Activated CD4-positive, alpha-beta T cell treated with anti-CD3 and anti-CD28 coated beads for 36 hours (primary cell): ENCODE measurements at regions of chr19 and their contacts with region 1.

Region 1: GRCh38 chr19:17419621-17420466 is at the start of gene MVB12A:
- DNase-seq: peak; percentile 97
- ATAC-seq: peak; percentile 95
- H3K4me3 Mint-ChIP-seq: peak within 1 kb of the TSS; percentile 91
- H3K27ac Mint-ChIP-seq: peak within 1 kb of the TSS; percentile 87
- H3K4me1 Mint-ChIP-seq: peaks cover 11% of the 10 kb centered on the region
- H3K27me3 Mint-ChIP-seq: no peaks in the 10 kb centered on the region
- total RNA-seq, gene MVB12A: 27.6 to 32.6 TPM

Region 2: GRCh38 chr19:17226002-17226933 is 193.6 kb before region 1 on chr19 and contains the start of gene OCEL1:
- CTCF ChIA-PET with region 1: no interaction called
- POLR2A ChIA-PET with region 1: no interaction called
- intact Hi-C with region 1: loop called in 1 of 2 experiments (anchors 1 kb)
- DNase-seq: peak; percentile 99
- ATAC-seq: peak; percentile 92
- H3K4me3 Mint-ChIP-seq: peak within 1 kb of the TSS; percentile 80
- H3K27ac Mint-ChIP-seq: peak within 1 kb of the TSS; percentile 93
- H3K4me1 Mint-ChIP-seq: peaks cover 7% of the 10 kb centered on the region
- H3K27me3 Mint-ChIP-seq: no peaks in the 10 kb centered on the region
- total RNA-seq, gene OCEL1: 10.9 to 11.7 TPM

Region 3: DNA sequence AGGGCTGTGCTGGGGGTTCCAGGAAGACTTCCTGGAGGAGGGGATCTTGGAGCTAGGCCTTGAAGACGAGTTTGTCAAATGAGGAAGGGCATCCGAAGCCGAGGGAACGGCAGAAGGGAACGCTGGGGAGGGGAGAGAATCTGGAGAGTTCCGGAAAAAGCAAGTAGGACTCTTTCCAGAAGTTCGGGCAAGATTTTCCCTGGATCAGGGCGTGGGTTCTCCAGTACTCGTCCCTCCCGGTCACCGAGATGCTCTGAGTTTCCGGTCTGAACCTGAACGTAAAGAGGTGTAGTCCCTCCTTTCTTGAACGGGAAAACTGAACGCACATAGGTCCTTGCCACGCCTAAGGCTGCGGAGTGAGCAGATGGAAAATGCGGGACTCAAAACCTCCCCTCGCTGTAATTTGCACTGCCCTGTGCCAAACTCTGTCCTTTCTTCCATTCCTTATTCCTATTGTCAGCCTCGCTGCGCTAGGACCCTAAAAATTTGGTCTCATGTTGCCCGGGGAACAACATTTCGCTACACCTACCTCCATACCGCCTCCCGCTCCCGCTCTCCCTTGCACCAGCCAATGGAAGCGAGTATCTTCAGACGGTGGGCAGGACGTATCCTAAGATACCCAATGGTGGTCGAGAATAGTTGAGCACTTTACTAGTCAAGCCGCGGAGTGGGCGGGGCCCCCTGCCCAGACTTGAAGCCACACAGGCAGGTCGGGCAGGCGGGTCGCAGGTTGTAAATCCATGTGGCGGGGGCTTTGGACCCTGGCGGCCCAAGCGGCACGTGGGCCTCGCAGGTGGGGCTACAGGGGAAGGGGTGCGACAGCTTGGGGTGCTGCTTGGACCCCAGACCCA is 82.7 kb before region 1 on chr19 and contains the start of gene GTPBP3:
- CTCF ChIA-PET with region 1: interaction called, 3 read pairs
- POLR2A ChIA-PET with region 1: no interaction called
- intact Hi-C with region 1: loop called (anchors 1 kb)
- DNase-seq: peak; percentile 98
- ATAC-seq: peak; percentile 89
- H3K4me3 Mint-ChIP-seq: peak within 1 kb of the TSS; percentile 98
- H3K27ac Mint-ChIP-seq: peak within 1 kb of the TSS; percentile 98
- H3K4me1 Mint-ChIP-seq: peaks cover 25% of the 10 kb centered on the region
- H3K27me3 Mint-ChIP-seq: no peaks in the 10 kb centered on the region
- total RNA-seq, gene GTPBP3: 37.3 to 39.8 TPM

Region 4: GRCh38 chr19:17405250-17406038 is 14.4 kb before region 1 on chr19 and contains the start of gene BST2:
- CTCF ChIA-PET with region 1: interaction called, 9 read pairs
- POLR2A ChIA-PET with region 1: interaction called, 10 read pairs
- intact Hi-C with region 1: loop called (anchors 1 kb)
- DNase-seq: peak; percentile 60
- ATAC-seq: peak; percentile 80
- H3K4me3 Mint-ChIP-seq: peak within 1 kb of the TSS; percentile 76
- H3K27ac Mint-ChIP-seq: peak within 1 kb of the TSS; percentile 90
- H3K4me1 Mint-ChIP-seq: peaks cover 28% of the 10 kb centered on the region
- H3K27me3 Mint-ChIP-seq: no peaks in the 10 kb centered on the region
- total RNA-seq, gene BST2: 62.0 to 70.7 TPM

Region 5: DNA sequence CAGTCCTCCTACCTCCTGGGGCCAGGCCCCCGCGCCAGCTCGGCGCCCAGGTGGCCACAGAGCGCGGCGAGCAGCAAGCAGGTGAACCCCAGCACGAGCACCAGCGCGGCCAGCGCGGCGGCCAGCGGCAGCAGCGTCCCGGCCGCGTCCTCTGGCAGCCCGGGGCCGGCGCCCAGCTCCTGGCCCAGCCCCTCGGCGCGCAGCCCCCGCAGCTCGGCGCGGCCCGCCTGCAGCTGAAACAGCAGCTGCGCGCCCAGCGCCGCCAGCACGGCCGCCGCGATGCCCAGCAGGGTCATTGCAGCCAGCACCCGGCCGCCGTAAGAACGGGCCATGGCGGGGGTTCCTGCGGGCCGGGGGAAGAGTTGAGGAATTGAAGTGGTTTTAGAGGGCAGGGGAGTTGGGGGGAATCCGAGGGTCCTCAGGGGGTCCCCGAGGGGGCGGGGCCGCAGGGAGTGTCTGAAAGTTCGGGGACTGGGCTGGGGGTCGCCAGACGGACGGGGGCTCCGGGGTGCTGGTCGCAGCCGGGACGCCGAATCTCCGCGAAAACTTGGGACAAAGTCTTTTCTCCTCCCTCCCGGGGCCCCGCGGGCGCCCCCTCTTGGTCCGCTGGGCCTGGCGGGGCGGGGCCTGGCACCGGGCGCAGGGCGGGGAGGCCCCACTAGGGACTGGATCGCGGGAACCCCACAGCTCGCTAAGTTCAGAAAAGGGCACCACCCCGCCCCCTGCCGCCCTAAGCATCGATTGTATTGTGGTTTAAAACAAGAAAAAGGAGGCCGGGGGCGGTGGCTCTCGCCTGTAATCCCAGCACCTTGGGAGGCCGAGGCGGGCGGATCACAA is 28.5 kb after region 1 on chr19 and contains the start of gene TMEM221:
- CTCF ChIA-PET with region 1: interaction called, 3 read pairs
- POLR2A ChIA-PET with region 1: no interaction called
- intact Hi-C with region 1: loop called in 1 of 2 experiments (anchors 1 kb)
- DNase-seq: peak; percentile 77
- ATAC-seq: peak; percentile 57
- H3K4me3 Mint-ChIP-seq: no peak within 1 kb of the TSS
- H3K27ac Mint-ChIP-seq: no peak within 1 kb of the TSS
- H3K4me1 Mint-ChIP-seq: peaks cover 16% of the 10 kb centered on the region
- H3K27me3 Mint-ChIP-seq: peaks cover 14% of the 10 kb centered on the region
- total RNA-seq, gene TMEM221: not detected